Heart right ventricle (tissue), 16 donors: ENCODE measurements at regions of chr15 and their contacts with region 1.

Region 1: DNA sequence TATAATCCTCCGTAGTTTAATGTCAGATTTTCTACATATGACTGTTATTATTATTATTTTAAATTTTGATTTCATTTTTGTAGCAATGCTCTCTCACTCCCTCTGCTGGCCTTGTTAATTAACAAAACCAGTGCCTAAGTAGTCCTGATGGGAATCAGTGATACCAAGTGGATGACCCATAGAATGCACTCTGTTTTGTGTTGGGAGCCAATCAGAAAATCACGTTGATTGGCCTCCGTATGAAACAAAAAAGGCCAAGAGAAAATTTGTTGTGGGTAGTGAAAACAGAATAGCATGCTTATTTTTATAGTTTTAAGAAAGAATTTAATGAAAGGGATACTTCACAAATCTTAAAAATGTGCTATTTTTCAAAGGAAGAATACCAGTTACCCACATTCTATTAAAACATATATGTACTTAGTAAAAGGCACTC is 34.4 kb upstream of the MEIS2 start:
- DNase-seq: no peak
- ATAC-seq: peak in 2 of 8 donors; percentile 65 to 71
- H3K4me3 ChIP-seq: no peak overlapping the region
- H3K27ac ChIP-seq: no peak overlapping the region
- H3K4me1 ChIP-seq: peaks cover 0 to 5% (median 0%) of the 10 kb centered on the region in 9 donors
- H3K27me3 ChIP-seq: peaks cover 0 to 3% (median 0%) of the 10 kb centered on the region in 7 donors
- CTCF ChIP-seq: peak; percentile 7 to 80 (median 68)

Region 2: GRCh38 chr15:36883713-36884517 is 250.8 kb before region 1 on chr15:
- intact Hi-C with region 1: loop called in 7 of 10 experiments (anchors 2 to 10 kb)
- DNase-seq: peak; percentile 87 to 88
- ATAC-seq: peak; percentile 85 to 96 (median 91)
- H3K4me3 ChIP-seq: peak overlapping the region in 9 of 10 donors; percentile 21 to 53 (median 40)
- H3K27ac ChIP-seq: no peak overlapping the region
- H3K4me1 ChIP-seq: peaks cover 0 to 29% (median 4%) of the 10 kb centered on the region in 9 donors
- H3K27me3 ChIP-seq: peaks cover 0 to 100% (median 66%) of the 10 kb centered on the region in 7 donors
- CTCF ChIP-seq: peak; percentile 76 to 88 (median 84)

Region 3: GRCh38 chr15:37204692-37205091 is 70.0 kb after region 1 on chr15:
- intact Hi-C with region 1: no loop called
- DNase-seq: no peak
- ATAC-seq: no peak
- H3K4me3 ChIP-seq: no peak overlapping the region
- H3K27ac ChIP-seq: no peak overlapping the region
- H3K4me1 ChIP-seq: no peaks in the 10 kb centered on the region
- H3K27me3 ChIP-seq: no peaks in the 10 kb centered on the region
- CTCF ChIP-seq: peak in 1 of 9 donors; percentile 19